Lower leg skin (tissue), 4 donors: ENCODE measurements at regions of chr3 and their contacts with region 1.

Region 1: GRCh38 chr3:104896624-104897023 is 470.1 kb upstream of the ALCAM start:
- DNase-seq: no peak
- H3K4me3 ChIP-seq: no peak overlapping the region
- CTCF ChIP-seq: no peak
- POLR2A ChIP-seq: no peak

Region 2: GRCh38 chr3:103862415-103862814 is 1034.2 kb before region 1 on chr3:
- intact Hi-C with region 1: no loop called
- DNase-seq: no peak
- H3K4me3 ChIP-seq: no peak overlapping the region
- CTCF ChIP-seq: no peak
- POLR2A ChIP-seq: no peak

Region 3: GRCh38 chr3:104939196-104939595 is 42.6 kb after region 1 on chr3:
- intact Hi-C with region 1: loop called (anchors 5 kb)
- DNase-seq: no peak
- H3K4me3 ChIP-seq: no peak overlapping the region
- CTCF ChIP-seq: no peak
- POLR2A ChIP-seq: no peak

Region 4: DNA sequence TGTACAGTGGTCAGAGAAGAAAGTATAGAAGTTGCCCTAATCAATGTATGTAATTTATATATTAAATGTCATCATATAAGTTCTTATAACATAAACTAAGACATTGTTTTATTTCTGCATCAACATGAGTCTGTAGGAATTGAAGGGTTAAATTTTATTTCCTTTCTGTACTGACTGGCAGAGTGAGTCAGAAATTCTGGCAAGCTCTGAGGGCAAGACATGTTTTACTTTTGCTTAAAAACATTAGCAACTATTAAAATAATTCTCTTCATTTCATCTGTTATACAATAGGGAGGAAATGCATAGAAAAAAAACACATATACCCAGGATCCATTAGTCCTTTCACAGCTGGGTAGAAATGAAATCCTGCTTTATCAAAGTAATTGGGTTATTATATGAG is 298.6 kb after region 1 on chr3:
- intact Hi-C with region 1: no loop called
- DNase-seq: no peak
- H3K4me3 ChIP-seq: no peak overlapping the region
- CTCF ChIP-seq: no peak
- POLR2A ChIP-seq: no peak